ENCODE measurements at regions of chr11 and their contacts with region 1.

Region 1: DNA sequence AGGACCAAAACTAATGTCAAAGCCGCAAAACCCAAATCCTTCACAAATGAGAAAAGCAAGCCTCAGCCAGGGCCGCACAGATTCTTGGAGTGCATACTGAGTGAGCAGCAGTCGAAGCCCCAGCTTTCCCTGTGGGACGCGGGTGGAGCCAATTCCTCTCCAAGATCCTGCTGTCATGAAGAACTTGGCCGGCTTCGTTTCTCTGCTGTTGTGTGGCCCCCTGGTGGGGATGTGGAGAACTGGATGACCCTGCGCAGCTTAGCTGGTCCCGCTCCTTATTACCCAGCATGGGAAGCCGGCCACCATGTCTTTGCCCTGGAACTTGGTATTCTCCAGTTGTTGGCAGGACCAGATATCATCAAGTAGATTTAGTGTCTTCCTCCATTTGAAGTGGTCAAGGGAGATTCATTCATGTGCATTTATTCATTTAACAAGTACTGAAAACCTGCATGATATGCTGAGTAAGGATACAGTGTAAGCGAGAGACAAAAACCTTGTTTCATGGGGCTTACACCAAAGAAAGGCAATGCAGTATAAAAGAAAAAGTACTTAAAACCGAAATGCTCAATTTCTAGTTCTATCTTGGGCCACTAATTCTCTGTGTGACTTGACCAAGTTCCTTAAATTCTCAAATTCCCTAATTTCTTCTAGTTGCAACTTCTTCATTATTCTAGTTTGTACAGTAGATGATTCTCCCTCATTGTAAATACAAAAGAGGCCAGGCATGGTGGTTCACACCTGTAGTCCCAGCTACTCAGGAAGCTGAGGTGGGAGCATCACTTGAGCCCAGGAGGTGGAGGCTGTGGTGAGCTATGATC is 56.7 kb upstream of the CRTAM start:
- DNase-seq: peak; percentile 48 to 85 (median 76)
- ATAC-seq: peak; percentile 86
- H3K4me3 ChIP-seq: no peak overlapping the region
- H3K4me3 Mint-ChIP-seq: no peak overlapping the region
- H3K27ac ChIP-seq: no peak overlapping the region
- H3K27ac Mint-ChIP-seq: no peak overlapping the region
- H3K4me1 ChIP-seq: no peaks in the 10 kb centered on the region
- H3K4me1 Mint-ChIP-seq: peaks cover 2% of the 10 kb centered on the region
- H3K27me3 ChIP-seq: no peaks in the 10 kb centered on the region
- H3K27me3 Mint-ChIP-seq: no peaks in the 10 kb centered on the region
- CTCF ChIP-seq: peak; percentile 88

Region 2: DNA sequence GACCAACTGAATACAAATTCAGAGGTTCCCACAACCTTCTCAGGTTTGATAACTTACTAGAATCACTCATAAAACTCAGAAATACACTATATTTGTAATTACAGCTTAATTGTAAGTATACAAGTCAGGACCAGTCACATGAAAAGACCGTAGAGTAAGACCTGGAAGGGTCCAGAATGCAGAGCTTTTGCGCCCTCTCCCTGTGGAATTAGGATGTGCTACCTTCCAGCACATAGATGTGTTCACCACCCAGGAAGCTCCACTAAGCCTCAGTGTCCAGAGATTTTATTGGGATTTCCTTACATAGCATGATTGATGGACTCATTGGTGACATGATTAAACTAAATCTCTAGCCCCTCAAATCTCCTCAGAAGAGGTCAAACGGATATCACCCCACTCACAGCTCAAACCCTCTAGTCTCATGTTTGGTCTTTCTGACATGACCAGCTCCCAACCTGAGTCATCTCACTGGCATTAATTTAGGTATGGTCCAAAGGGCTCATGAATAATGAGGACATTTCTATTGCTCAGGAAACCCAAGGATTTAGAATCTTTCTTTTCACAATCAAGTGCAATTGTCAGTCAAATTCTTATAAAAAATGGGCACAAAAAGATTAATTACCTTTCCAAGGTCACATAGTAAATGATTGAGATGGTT is 203.3 kb before region 1 on chr11:
- CTCF ChIA-PET with region 1: interaction called, 79 read pairs
- POLR2A ChIA-PET with region 1: no interaction called
- intact Hi-C with region 1: loop called (anchors 1 kb)
- DNase-seq: no peak
- ATAC-seq: no peak
- H3K4me3 ChIP-seq: no peak overlapping the region
- H3K4me3 Mint-ChIP-seq: no peak overlapping the region
- H3K27ac ChIP-seq: no peak overlapping the region
- H3K27ac Mint-ChIP-seq: no peak overlapping the region
- H3K4me1 ChIP-seq: peaks cover 4% of the 10 kb centered on the region
- H3K4me1 Mint-ChIP-seq: peaks cover 7% of the 10 kb centered on the region
- H3K27me3 ChIP-seq: no peaks in the 10 kb centered on the region
- H3K27me3 Mint-ChIP-seq: no peaks in the 10 kb centered on the region
- CTCF ChIP-seq: no peak

Region 3: GRCh38 chr11:122594986-122595645 is 186.5 kb before region 1 on chr11:
- CTCF ChIA-PET with region 1: interaction called, 10 read pairs
- POLR2A ChIA-PET with region 1: no interaction called
- intact Hi-C with region 1: no loop called
- DNase-seq: no peak
- ATAC-seq: no peak
- H3K4me3 ChIP-seq: no peak overlapping the region
- H3K4me3 Mint-ChIP-seq: no peak overlapping the region
- H3K27ac ChIP-seq: no peak overlapping the region
- H3K27ac Mint-ChIP-seq: no peak overlapping the region
- H3K4me1 ChIP-seq: no peaks in the 10 kb centered on the region
- H3K4me1 Mint-ChIP-seq: no peaks in the 10 kb centered on the region
- H3K27me3 ChIP-seq: peaks cover 3% of the 10 kb centered on the region in 2 experiments
- H3K27me3 Mint-ChIP-seq: peaks cover 18% of the 10 kb centered on the region
- CTCF ChIP-seq: no peak

Region 4: DNA sequence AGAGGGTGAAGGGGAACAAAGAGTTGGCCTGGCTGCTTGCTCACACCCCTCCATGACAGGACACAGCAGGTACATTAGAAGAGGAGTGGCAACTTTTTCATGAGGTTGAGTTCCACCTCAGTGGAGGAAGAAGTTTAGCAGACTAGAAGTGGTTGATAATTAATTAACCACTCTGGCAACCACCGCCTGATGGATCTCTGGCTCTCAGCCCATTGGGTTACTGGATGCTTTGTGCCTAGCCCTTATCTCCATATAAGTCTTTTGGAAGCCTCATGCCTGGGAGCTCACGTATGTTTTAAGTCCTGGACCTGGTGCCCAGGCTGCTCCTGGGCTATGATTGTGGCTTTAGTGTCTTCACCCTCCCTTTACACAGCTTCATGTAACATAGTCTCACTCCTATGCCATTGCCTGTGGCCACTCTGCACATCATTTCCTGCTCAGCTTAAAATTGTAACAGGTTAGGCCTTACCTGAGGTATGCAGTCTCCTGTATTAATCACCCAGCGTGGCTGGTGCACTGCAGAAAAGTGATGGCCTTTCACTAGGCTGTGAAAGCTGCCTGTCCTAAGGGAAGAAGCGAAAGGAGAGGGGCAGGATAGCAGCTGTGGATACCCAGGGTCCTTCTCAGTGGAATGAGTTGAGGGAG is 16.0 kb before region 1 on chr11:
- CTCF ChIA-PET with region 1: interaction called, 46 read pairs
- POLR2A ChIA-PET with region 1: no interaction called
- intact Hi-C with region 1: no loop called
- DNase-seq: no peak
- ATAC-seq: no peak
- H3K4me3 ChIP-seq: no peak overlapping the region
- H3K4me3 Mint-ChIP-seq: no peak overlapping the region
- H3K27ac ChIP-seq: no peak overlapping the region
- H3K27ac Mint-ChIP-seq: no peak overlapping the region
- H3K4me1 ChIP-seq: no peaks in the 10 kb centered on the region
- H3K4me1 Mint-ChIP-seq: peaks cover 26% of the 10 kb centered on the region
- H3K27me3 ChIP-seq: no peaks in the 10 kb centered on the region
- H3K27me3 Mint-ChIP-seq: no peaks in the 10 kb centered on the region
- CTCF ChIP-seq: no peak

Measured in CD8-positive, alpha-beta T cell (primary cell).